CD8-positive, alpha-beta T cell (primary cell): ENCODE measurements at regions of chr7 and their contacts with region 1.

Region 1: GRCh38 chr7:44847508-44847920 is 373 bp downstream of the H2AZ2 start:
- DNase-seq: peak; percentile 75 to 92 (median 84)
- ATAC-seq: peak; percentile 45
- H3K4me3 ChIP-seq: peak overlapping the region; percentile 59 to 66
- H3K4me3 Mint-ChIP-seq: peak overlapping the region; percentile 92
- H3K27ac ChIP-seq: peak overlapping the region; percentile 86 to 99
- H3K27ac Mint-ChIP-seq: peak overlapping the region; percentile 96
- H3K4me1 ChIP-seq: peaks cover 30% of the 10 kb centered on the region
- H3K4me1 Mint-ChIP-seq: peaks cover 42% of the 10 kb centered on the region
- H3K27me3 ChIP-seq: no peaks in the 10 kb centered on the region
- H3K27me3 Mint-ChIP-seq: no peaks in the 10 kb centered on the region
- CTCF ChIP-seq: peak; percentile 56

Region 2: DNA sequence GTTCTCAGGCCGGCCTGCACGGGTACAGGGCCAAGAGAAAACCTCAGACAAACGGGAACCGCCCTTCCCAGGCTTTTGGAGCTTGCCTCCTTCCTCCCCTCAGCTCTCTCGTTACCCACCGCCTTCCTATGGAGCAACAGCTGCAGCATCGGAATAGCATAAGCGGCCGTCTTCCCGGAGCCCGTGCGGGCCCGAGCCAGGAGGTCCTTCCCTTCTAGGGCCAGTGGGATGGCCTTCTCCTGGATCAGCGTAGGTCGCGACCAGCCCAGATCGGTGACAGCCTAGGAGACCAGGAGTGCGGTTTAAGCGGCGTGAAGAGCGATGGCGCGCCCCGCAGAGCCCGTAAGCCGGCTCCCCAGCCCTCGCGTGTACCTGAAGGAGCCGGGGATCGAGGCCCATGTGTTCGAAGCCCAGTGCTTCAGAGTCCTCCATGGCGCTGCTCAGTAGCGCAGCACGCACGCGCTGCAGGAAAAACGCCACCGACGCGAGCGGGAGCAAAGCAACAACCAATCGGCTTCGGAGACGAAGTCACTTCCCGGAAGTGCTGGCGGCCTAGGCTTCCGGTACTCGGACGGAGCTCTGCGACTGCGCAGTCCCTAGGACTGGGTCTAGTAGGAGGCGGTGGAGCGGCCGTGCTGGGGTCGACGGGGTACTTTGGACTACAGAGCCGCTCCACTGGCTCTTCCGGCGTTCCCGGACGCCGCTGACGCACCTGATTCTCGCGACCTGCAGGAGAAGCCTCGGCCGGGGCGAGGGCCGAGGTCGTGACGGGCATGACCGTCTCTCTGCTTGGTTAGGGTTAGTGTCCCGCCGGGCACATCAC is 273.8 kb before region 1 on chr7 and contains the start of gene DDX56:
- CTCF ChIA-PET with region 1: interaction called, 3 read pairs
- POLR2A ChIA-PET with region 1: interaction called, 12 read pairs
- intact Hi-C with region 1: no loop called
- DNase-seq: peak; percentile 75 to 96 (median 93)
- ATAC-seq: peak; percentile 96
- H3K4me3 ChIP-seq: peak within 1 kb of the TSS; percentile 92 to 94
- H3K4me3 Mint-ChIP-seq: peak within 1 kb of the TSS; percentile 96
- H3K27ac ChIP-seq: peak within 1 kb of the TSS; percentile 91 to 94
- H3K27ac Mint-ChIP-seq: peak within 1 kb of the TSS; percentile 99
- H3K4me1 ChIP-seq: peaks cover 28% of the 10 kb centered on the region
- H3K4me1 Mint-ChIP-seq: peaks cover 51% of the 10 kb centered on the region
- H3K27me3 ChIP-seq: no peaks in the 10 kb centered on the region
- H3K27me3 Mint-ChIP-seq: no peaks in the 10 kb centered on the region
- CTCF ChIP-seq: no peak
- total RNA-seq, gene DDX56: 140 to 141 TPM

Region 3: GRCh38 chr7:44606450-44607254 is 240.9 kb before region 1 on chr7 and contains the start of gene OGDH:
- CTCF ChIA-PET with region 1: interaction called, 4 read pairs
- POLR2A ChIA-PET with region 1: interaction called, 26 read pairs
- intact Hi-C with region 1: loop called (anchors 1 kb)
- DNase-seq: peak; percentile 98 to 100 (median 99)
- ATAC-seq: peak; percentile 92
- H3K4me3 ChIP-seq: peak within 1 kb of the TSS; percentile 87 to 90
- H3K4me3 Mint-ChIP-seq: peak within 1 kb of the TSS; percentile 99
- H3K27ac ChIP-seq: peak within 1 kb of the TSS; percentile 96 to 98
- H3K27ac Mint-ChIP-seq: peak within 1 kb of the TSS; percentile 100
- H3K4me1 ChIP-seq: peaks cover 30% of the 10 kb centered on the region
- H3K4me1 Mint-ChIP-seq: peaks cover 34% of the 10 kb centered on the region
- H3K27me3 ChIP-seq: no peaks in the 10 kb centered on the region
- H3K27me3 Mint-ChIP-seq: no peaks in the 10 kb centered on the region
- CTCF ChIP-seq: no peak
- total RNA-seq, gene OGDH: 36.8 to 39.6 TPM

Region 4: DNA sequence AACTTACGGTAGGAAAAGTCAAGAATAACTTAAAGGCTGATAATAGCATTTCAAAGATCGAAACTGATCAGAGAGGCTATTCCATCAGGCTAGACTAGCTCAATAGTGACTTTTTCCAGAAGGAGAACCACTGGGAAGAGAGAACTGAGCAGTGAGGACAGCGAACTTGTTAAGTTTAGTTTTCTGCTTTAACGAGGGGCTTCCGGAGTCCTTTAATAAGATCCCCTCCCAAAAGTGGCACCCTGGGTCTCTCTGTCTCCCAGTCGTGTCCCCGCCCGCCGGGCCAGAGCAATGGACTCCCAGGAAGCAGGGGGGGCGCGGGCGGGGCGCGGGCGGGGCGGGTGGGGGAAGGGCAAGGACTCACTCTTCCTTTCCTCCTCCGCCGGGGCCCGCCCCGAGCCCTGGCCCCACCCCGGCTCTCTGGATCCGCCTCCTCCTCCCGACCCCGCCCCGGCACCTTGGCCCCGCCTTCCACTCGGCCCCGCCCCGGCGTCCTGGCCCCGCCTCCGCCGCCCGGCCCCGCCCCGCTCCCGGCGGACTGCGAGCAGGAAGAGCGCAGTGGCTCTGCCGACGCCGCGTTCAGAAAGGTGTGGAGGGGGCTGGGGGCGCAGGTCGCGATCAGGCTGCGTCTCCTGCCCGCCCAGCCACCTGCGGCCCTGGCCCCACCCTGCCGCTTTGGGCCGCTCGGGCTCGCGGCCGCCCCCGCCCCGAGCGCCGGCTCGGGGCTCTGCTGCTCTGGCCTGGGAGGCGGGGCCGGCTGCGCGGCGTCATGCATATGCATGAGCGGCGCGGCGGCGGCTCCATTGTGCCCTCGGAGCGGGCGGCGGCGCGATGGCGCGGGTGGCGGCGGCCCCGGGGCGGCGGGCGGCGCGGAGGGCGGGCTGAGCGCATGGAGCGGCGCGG is 99.2 kb before region 1 on chr7 and contains the start of gene ZMIZ2:
- CTCF ChIA-PET with region 1: interaction called, 3 read pairs
- POLR2A ChIA-PET with region 1: interaction called, 9 read pairs
- intact Hi-C with region 1: loop called (anchors 1 to 2 kb)
- DNase-seq: peak; percentile 84 to 98 (median 92)
- ATAC-seq: peak; percentile 91
- H3K4me3 ChIP-seq: peak within 1 kb of the TSS; percentile 77 to 80
- H3K4me3 Mint-ChIP-seq: peak within 1 kb of the TSS; percentile 79
- H3K27ac ChIP-seq: peak within 1 kb of the TSS; percentile 83
- H3K27ac Mint-ChIP-seq: peak within 1 kb of the TSS; percentile 90
- H3K4me1 ChIP-seq: peaks cover 27% of the 10 kb centered on the region
- H3K4me1 Mint-ChIP-seq: peaks cover 35% of the 10 kb centered on the region
- H3K27me3 ChIP-seq: no peaks in the 10 kb centered on the region
- H3K27me3 Mint-ChIP-seq: no peaks in the 10 kb centered on the region
- CTCF ChIP-seq: no peak
- total RNA-seq, gene ZMIZ2: 67.1 to 71.3 TPM

Region 5: DNA sequence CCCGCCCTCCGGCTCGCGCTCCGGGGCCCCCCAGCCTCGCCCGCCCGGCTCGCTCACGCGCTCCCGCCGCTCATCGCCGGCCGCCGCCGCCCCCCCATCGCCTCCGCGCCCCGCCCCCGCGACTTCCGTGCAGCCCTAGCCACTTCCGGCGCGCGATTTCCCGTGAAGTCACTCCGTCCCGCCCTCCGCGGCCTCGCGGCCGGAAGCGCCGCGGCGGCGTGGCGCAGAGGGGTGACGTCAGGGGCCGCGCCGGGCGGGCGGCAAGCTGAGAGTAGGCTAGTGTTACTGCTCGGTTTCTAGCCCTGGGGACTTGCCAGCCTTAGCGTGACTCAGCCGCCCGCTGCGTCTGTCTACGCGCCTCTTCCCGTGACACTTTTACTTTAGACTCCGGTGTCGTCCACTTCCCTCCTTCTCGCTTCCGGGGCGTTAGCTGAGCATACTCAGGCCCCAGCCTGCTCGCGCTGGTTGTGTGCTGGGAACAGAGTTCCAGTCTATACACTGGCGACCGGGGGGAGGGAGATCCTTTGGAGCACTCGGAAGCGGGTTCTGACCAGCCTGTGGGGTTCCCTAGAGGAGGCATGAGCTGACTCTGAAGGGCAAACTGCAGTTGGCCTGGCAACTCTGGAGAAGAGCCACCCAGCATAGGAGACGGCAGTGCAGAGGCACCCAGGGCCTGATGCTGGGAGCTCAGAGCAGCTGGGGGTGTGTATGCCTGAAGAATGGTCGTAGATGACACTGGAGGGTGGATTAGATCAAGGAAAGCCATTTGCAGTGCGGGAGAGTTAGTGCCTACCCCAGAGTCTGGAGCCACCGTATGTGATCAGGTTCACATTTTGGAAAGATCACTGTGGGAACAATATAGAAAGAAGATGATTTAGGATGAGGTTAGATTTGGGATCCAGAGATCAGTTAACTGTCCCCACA is 38.1 kb after region 1 on chr7 and contains the start of gene PURB:
- CTCF ChIA-PET with region 1: interaction called, 4 read pairs
- POLR2A ChIA-PET with region 1: interaction called, 37 read pairs
- intact Hi-C with region 1: loop called (anchors 1 kb)
- DNase-seq: peak; percentile 94 to 99 (median 97)
- ATAC-seq: peak; percentile 86
- H3K4me3 ChIP-seq: peak within 1 kb of the TSS; percentile 64 to 67
- H3K4me3 Mint-ChIP-seq: peak within 1 kb of the TSS; percentile 92
- H3K27ac ChIP-seq: peak within 1 kb of the TSS; percentile 98 to 100
- H3K27ac Mint-ChIP-seq: peak within 1 kb of the TSS; percentile 99
- H3K4me1 ChIP-seq: peaks cover 36% of the 10 kb centered on the region
- H3K4me1 Mint-ChIP-seq: peaks cover 45% of the 10 kb centered on the region
- H3K27me3 ChIP-seq: no peaks in the 10 kb centered on the region
- H3K27me3 Mint-ChIP-seq: no peaks in the 10 kb centered on the region
- CTCF ChIP-seq: no peak
- total RNA-seq, gene PURB: 16.3 to 16.5 TPM

Region 6: DNA sequence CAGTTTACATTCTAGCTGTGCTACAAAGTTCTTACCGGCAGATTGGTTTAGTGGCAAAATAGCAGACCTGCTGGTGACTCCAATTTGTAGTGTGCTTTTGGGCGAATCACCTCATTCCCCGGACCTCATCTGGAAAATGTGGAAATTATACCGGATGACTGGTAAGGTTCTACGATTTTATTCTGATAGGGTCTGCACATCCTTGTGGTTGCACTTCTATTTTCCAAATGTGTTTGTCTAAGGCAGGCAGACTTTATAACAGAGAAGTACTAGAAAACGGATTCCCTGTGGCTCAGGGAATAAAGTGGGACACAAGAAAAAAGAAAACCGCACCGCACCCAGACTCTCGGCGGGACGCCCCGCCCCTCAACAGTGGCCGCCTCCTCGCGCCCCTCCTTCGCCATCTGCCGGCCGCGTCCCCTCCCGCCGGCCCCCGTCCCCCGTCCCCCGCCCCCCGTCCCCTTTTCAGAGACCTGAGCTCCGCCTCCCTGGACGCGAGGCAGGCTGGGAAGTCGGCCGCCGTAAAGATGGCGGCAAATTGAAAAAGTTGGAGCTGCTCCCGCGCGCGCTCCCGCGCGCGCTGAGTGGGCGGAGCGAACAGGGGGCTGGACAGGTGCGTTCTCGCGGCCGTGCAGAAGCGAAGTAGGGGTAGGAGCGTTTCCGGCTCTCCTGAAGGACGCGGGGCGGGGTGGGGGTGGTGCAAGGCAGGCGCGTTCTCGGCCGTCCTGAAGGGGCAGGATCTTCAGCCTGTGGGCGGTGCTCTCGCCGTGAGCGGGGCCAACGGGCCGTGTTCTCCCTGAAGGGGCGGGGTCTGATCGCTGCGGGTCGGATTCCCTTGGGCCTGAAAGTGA is 152.0 kb after region 1 on chr7:
- CTCF ChIA-PET with region 1: interaction called, 3 read pairs
- POLR2A ChIA-PET with region 1: interaction called, 6 read pairs
- intact Hi-C with region 1: loop called in 1 of 2 experiments (anchors 1 kb)
- DNase-seq: peak; percentile 97 to 99 (median 99)
- ATAC-seq: peak; percentile 81
- H3K4me3 ChIP-seq: peak overlapping the region; percentile 59 to 75
- H3K4me3 Mint-ChIP-seq: peak overlapping the region; percentile 99
- H3K27ac ChIP-seq: peak overlapping the region; percentile 70
- H3K27ac Mint-ChIP-seq: peak overlapping the region; percentile 98
- H3K4me1 ChIP-seq: peaks cover 36% of the 10 kb centered on the region
- H3K4me1 Mint-ChIP-seq: peaks cover 51% of the 10 kb centered on the region
- H3K27me3 ChIP-seq: no peaks in the 10 kb centered on the region
- H3K27me3 Mint-ChIP-seq: no peaks in the 10 kb centered on the region
- CTCF ChIP-seq: no peak

Region 7: DNA sequence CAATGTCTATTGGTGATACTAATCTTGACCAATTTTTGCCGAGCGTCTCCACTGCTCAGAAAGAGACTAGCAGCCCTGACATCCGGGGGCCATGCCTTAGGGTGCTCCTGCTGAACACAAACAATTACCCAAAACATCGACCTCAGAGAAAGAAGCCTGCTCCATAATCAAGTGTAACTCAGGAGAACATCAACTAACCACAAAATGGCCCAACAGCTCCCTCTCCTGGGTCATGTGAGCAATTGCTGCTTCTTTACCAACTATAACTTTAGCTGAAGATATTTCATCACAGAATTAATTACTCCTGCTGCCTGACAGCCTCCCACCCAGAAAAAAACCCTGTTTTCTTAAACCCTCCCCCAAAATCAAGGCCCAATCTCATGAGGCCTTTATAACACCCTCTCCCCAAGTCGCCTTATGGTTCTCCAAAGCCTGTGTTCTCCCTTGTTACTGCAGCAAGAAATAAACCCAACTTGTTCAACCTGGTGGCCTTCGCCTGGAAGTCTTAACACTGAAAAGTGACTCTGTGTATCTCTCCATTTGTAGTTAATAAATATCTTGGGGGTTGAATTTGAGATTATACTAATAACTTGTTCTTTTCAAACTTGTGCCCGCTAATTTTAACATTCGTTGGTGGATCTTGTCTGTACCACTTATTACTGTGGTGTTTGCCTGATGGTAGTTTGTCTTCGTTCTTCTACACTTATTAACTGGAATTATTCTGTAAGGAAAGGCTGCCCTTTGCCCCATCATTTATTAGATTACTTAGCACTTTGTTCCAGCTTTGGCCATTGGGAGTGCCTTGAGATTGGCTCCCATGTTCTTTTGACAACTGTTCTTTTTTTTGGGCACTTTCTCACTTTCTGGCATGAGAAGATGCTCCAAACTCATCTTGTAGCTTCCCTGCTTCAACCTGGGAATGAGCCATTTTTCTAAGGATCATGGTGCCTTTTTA is 288.9 kb after region 1 on chr7:
- CTCF ChIA-PET with region 1: interaction called, 10 read pairs
- POLR2A ChIA-PET with region 1: no interaction called
- intact Hi-C with region 1: no loop called
- DNase-seq: peak; percentile 41 to 89 (median 66)
- ATAC-seq: peak; percentile 97
- H3K4me3 ChIP-seq: no peak overlapping the region
- H3K4me3 Mint-ChIP-seq: no peak overlapping the region
- H3K27ac ChIP-seq: no peak overlapping the region
- H3K27ac Mint-ChIP-seq: no peak overlapping the region
- H3K4me1 ChIP-seq: peaks cover 3% of the 10 kb centered on the region
- H3K4me1 Mint-ChIP-seq: peaks cover 4% of the 10 kb centered on the region
- H3K27me3 ChIP-seq: no peaks in the 10 kb centered on the region
- H3K27me3 Mint-ChIP-seq: peaks cover 4% of the 10 kb centered on the region
- CTCF ChIP-seq: peak; percentile 92